ENCODE measurements at regions of chr11 and their contacts with region 1.

Region 1: DNA sequence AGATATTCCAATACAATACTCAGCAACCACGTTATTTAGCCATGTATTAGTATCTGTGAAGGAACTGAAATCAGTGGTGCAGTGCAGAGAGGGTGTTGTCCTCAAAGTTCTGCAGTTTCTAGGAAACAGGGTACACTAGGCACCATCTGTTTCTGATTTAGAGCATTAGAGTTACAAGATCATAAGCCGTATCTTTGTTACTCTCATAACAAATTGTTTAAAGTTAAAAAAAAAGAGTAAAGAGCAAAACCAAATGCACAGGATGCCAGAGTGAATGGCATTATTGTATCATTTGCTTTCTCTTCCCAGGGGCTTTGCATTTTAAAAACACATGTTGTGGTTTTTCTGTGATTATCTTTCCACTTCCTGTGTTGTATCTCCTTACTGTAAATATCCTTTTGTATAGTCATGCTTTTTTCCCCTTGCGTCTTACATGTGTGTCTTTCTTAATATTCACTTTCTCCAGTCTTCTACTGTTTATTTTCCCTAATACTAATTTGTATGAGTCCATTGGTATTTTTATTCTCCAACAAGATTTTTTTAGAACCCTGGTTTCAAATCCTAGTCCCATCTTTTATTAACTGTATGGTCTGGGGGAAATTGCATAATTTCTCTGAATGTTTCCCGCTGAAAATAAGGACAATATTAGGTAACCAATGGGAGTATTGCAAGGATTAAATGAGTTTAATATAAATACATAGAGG is 15.2 kb upstream of the NUP160 start:
- DNase-seq: no peak
- ATAC-seq: peak; percentile 56
- H3K4me3 Mint-ChIP-seq: no peak overlapping the region
- H3K27ac Mint-ChIP-seq: no peak overlapping the region
- H3K4me1 Mint-ChIP-seq: peaks cover 39% of the 10 kb centered on the region
- H3K27me3 Mint-ChIP-seq: no peaks in the 10 kb centered on the region

Region 2: GRCh38 chr11:47688111-47688510 is 175.2 kb before region 1 on chr11:
- CTCF ChIA-PET with region 1: no interaction called
- POLR2A ChIA-PET with region 1: no interaction called
- intact Hi-C with region 1: no loop called
- DNase-seq: no peak
- ATAC-seq: no peak
- H3K4me3 Mint-ChIP-seq: no peak overlapping the region
- H3K27ac Mint-ChIP-seq: no peak overlapping the region
- H3K4me1 Mint-ChIP-seq: no peaks in the 10 kb centered on the region
- H3K27me3 Mint-ChIP-seq: no peaks in the 10 kb centered on the region

Region 3: GRCh38 chr11:47886096-47886495 is 22.8 kb after region 1 on chr11:
- CTCF ChIA-PET with region 1: no interaction called
- POLR2A ChIA-PET with region 1: interaction called, 11 read pairs
- intact Hi-C with region 1: no loop called
- DNase-seq: peak; percentile 26
- ATAC-seq: peak; percentile 42
- H3K4me3 Mint-ChIP-seq: no peak overlapping the region
- H3K27ac Mint-ChIP-seq: peak overlapping the region; percentile 78
- H3K4me1 Mint-ChIP-seq: peaks cover 45% of the 10 kb centered on the region
- H3K27me3 Mint-ChIP-seq: no peaks in the 10 kb centered on the region

Measured in activated CD4-positive, alpha-beta T cell treated with anti-CD3 and anti-CD28 coated beads for 36 hours (primary cell).